Mammary epithelial cell (primary cell): ENCODE measurements at regions of chr22 and their contacts with region 1.

Region 1: GRCh38 chr22:49800408-49801238 is 27.1 kb downstream of the BRD1 start:
- DNase-seq: no peak
- H3K4me3 ChIP-seq: no peak overlapping the region
- H3K27ac ChIP-seq: no peak overlapping the region
- H3K4me1 ChIP-seq: no peaks in the 10 kb centered on the region
- H3K27me3 ChIP-seq: no peaks in the 10 kb centered on the region
- CTCF ChIP-seq: no peak

Region 2: DNA sequence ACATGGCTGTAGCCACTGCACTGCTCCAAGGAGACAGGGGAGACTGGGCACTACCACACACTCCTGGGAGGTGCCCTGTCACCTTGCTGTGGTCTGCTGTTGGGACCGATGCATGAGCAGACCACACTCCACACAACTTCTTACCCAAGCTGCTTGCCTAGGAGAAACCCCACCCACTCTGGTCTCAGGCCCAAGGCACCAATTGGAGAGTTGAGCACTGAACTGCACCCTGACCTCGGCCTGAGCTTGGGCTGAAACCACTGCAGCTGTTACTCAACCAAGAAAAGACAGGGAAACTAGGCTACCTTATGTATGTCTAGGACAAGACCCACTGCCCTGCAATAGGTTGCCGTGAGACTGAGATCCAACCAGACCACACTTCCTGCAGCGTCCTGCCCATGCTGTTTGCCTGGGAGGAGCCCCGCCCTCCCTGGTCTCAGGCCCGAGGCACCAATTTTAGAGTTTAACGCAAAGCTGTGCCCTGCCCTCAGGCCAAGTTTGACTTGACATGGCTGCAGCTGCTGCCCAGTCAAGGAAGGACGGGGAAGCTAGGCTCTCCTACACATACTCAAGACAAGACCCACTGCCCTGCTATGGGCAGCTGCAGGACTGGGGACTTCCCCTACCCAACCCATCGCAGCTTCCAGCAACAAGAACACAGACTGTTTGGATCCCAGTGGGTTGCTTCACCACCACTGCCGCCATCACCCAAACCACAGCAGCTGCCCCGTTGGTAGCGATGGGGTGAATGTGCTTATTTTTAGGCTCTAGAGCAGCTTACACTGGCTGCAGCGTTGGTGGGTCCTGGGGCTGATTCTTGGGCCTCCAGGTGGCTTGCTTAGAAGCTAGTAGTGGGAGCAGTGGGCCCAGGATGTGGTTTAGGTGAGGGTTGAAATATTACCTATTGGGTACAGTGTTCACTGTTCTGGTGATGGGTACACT is 39.7 kb before region 1 on chr22:
- CTCF ChIA-PET with region 1: no interaction called
- dilution Hi-C with region 1: loop called (anchors 5 kb)
- in situ Hi-C with region 1: no loop called
- intact Hi-C with region 1: no loop called
- DNase-seq: no peak
- H3K4me3 ChIP-seq: no peak overlapping the region
- H3K27ac ChIP-seq: peak overlapping the region; percentile 45
- H3K4me1 ChIP-seq: peaks cover 16% of the 10 kb centered on the region
- H3K27me3 ChIP-seq: no peaks in the 10 kb centered on the region
- CTCF ChIP-seq: no peak

Region 3: DNA sequence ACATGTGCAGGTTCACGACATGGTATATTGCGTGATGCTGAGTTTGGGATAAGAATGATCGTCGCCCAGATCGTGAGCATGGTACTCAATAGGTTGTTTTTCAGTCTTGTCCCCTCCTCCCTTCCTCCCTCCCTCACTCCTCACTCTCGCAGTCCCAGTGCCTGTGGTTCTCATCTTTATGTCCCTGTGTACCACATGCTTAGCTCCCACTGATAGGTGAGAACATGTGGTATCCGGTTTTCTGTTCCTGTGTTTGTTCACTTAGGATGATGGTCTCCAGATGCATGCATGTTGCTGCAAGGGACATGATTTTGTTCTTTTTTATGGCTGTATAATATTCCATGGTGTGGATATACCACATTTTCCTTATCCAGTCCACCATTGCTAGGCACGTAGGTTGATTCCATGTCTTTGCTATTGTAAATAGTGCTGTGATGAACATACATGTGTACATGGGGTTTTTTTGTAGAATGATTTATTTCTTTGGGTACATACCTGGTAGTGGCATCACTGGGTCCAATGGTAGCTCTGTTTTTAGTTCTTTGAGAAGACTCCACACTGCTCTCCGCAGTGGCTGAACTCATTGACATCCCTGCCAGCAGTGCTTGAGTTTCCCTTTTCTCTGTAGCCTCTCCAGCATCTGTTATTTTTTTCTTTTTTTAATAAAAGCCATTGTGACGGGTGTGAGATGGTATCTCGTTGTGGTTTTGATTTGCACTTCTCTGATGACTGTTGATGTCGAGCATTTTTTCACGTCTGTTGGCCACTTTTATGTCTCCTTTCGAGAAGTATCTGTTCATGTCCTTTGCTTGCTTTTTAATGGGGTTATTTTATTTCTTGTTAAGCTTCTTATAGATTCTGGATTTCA is 69.5 kb after region 1 on chr22:
- CTCF ChIA-PET with region 1: no interaction called
- dilution Hi-C with region 1: loop called (anchors 5 kb)
- in situ Hi-C with region 1: no loop called
- intact Hi-C with region 1: no loop called
- DNase-seq: no peak
- H3K4me3 ChIP-seq: no peak overlapping the region
- H3K27ac ChIP-seq: no peak overlapping the region
- H3K4me1 ChIP-seq: no peaks in the 10 kb centered on the region
- H3K27me3 ChIP-seq: no peaks in the 10 kb centered on the region
- CTCF ChIP-seq: no peak